Endothelial cell of umbilical vein (primary cell): ENCODE measurements at regions of chr9 and their contacts with region 1.

Region 1: DNA sequence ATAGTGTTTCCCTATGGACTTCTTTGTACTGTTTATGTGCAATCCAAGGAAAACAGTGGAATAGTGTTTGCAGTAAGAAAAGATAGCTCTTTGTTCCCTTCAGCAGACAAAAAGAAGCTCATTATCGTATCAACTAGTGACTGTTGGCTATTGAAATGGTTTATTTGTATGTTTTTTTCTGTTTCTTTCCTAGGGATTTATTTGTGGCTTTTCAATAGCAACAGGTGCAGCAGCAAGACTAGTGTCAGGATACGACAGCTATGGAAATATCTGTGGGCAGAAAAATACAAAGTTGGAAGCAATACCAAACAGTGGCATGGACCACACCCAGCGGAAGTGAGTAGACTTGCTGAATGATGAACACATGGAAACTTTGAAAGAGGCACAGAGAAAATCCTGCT is 65.1 kb downstream of the SLC44A1 start:
- DNase-seq: peak; percentile 74
- H3K4me3 ChIP-seq: no peak overlapping the region
- H3K27ac ChIP-seq: peak overlapping the region; percentile 4
- H3K4me1 ChIP-seq: peaks cover 22% of the 10 kb centered on the region
- H3K27me3 ChIP-seq: no peaks in the 10 kb centered on the region
- CTCF ChIP-seq: no peak
- POLR2A ChIP-seq: no peak

Region 2: GRCh38 chr9:105299190-105299854 is 10.2 kb before region 1 on chr9:
- CTCF ChIA-PET with region 1: interaction called, 6 read pairs
- POLR2A ChIA-PET with region 1: no interaction called
- dilution Hi-C with region 1: no loop called
- intact Hi-C with region 1: loop called (anchors 1 kb)
- DNase-seq: peak; percentile 98
- H3K4me3 ChIP-seq: no peak overlapping the region
- H3K27ac ChIP-seq: peak overlapping the region; percentile 96
- H3K4me1 ChIP-seq: peaks cover 45% of the 10 kb centered on the region
- H3K27me3 ChIP-seq: no peaks in the 10 kb centered on the region
- CTCF ChIP-seq: no peak
- POLR2A ChIP-seq: peak; percentile 69